Activated T-helper 1 cell treated with anti-CD3 and anti-CD28 coated beads, Interleukin-12 subunit alpha, Interleukin-12 subunit beta, Interleukin-2, Interleukin-4 antibody, amounts not matched to agents 30 ng/mL and 10 ng/mL and 1 ng/mL, durations not matched to agents 14 hours and 24 hours and 36 hours (primary cell): ENCODE measurements at regions of chr14 and their contacts with region 1.

Region 1: DNA sequence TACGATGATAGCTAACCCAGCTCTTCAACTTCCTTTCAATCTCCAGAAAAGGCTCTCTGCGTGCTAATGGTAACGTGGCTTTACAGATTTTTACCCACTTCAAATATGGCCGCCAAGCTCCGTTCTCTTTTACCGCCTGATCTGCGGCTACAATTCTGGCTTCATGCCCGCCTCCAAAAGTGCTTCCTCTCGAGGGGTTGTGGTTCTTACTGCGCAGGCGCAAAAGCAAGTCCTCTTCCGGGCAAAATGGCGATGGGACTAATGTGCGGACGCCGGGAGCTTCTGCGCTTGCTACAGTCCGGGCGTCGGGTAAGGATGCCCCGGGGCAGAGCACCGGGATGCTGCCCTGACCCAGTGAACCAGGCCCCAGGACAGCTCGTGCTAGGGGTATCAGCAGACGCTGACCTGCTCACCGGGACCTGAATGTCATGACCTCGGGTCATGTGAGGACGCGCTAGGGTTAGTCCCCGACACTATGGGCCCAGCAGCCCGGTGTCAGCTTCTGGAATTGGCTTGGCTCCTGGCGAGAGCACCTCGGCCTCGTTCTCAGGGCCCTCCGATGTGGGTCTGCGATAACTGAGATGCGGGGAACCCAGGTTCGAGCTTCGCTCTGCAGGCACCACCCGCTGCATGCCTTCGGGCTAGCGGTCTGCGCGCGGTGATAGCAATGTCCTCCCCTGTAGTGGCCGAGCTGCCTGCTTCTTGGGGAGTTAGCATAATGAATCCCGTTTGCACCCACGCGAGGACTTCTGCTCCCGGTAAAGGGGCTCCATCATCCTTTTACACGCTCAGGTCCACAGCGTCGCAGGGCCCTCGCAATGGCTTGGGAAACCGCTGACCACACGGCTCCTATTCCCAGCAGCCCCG is at the start of gene OXA1L:
- DNase-seq: peak; percentile 94
- H3K4me3 Mint-ChIP-seq: peak within 1 kb of the TSS; percentile 94
- H3K27ac Mint-ChIP-seq: peak within 1 kb of the TSS; percentile 96
- H3K4me1 Mint-ChIP-seq: peaks cover 22% of the 10 kb centered on the region
- H3K27me3 Mint-ChIP-seq: no peaks in the 10 kb centered on the region
- total RNA-seq, gene OXA1L: 125 and 127 TPM in 2 replicates

Region 2: DNA sequence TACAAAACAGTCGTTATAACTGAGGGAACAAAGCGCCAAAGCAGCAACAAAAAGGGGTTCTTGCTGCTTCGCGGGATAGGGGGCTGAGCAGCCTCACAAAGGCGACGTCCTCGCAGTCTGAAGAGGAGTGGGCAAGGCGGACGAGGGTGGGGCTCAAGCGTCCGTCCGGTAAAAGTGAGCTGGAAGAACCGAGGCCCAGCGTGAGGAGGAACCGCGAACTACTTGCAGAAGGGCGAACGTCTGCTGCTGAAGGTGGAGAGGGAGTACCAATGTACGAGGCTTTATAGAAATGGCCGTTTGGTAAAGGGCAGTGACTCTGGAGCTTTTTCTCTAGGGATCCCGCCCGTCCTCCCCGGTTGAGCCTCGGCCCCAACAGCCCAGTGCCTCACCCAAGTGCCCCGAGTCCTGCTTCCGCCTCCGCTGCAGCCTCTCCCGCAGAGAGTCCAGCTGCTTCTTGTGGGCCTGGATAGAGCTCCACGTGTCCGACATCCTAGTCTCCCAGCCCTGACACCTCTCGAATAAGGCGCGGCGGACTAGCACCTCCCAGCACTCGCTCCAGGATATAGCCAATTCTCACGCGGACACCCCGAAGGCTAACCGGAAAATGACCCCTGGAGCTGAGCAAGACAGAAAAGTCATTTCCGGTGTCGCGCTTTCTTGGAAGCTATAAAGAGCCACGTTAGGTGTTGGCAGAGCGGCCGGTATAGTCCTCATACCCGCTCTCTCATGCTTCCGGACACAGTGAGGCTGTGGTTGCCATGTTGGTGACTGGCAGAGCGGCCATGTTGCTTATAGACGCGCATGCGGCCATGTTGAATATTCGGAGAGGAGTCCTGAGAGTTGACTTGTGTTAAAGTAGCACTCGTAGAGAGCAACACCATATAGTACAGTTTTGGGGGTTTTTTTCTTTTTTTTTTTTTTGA is 1255.7 kb before region 1 on chr14 and contains the start of gene METTL3:
- intact Hi-C with region 1: loop called (anchors 2 kb)
- DNase-seq: peak; percentile 93
- H3K4me3 Mint-ChIP-seq: peak within 1 kb of the TSS; percentile 99
- H3K27ac Mint-ChIP-seq: peak within 1 kb of the TSS; percentile 93
- H3K4me1 Mint-ChIP-seq: peaks cover 27% of the 10 kb centered on the region
- H3K27me3 Mint-ChIP-seq: peaks cover 12% of the 10 kb centered on the region
- total RNA-seq, gene METTL3: 75.1 and 77.7 TPM in 2 replicates

Region 3: DNA sequence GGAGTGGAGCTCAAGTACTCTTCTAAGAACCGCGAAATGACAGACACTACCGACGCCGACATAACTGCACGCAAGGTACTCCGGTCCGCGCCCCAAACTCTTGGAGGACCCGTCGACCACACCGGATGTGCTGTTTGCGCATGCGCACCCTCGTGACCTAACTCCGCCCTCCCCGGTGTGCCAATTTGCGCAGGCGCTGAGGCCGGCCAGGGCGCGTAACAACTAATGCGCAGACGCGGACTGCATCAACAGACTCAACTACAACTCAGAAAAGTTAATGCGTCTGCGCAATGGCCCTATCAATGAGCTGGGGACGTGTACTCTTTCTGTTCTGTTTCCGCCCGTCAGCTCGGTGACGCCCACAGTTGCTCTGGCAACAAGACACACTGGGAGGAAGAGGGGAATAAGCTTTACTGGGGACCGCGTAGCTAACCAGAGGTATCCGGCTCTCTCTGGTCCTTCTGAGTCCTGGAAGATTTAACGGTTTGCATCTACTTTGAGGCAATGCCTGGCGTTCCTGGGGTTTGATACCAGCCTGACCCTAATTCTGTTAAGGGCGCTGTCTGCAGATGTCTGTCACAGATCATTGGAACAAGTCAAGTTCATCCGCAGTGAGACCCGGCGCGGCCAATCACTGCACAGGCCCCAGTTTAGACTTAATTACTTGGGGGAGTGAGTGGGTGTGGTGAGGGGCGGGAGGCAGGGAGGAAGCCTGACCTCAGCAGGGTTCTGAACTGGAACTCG is 177.4 kb before region 1 on chr14 and contains the start of gene DAD1:
- intact Hi-C with region 1: loop called (anchors 1 kb)
- DNase-seq: peak; percentile 100
- H3K4me3 Mint-ChIP-seq: peak within 1 kb of the TSS; percentile 91
- H3K27ac Mint-ChIP-seq: peak within 1 kb of the TSS; percentile 96
- H3K4me1 Mint-ChIP-seq: peaks cover 55% of the 10 kb centered on the region
- H3K27me3 Mint-ChIP-seq: no peaks in the 10 kb centered on the region
- total RNA-seq, gene DAD1: 228 and 229 TPM in 2 replicates

Region 4: DNA sequence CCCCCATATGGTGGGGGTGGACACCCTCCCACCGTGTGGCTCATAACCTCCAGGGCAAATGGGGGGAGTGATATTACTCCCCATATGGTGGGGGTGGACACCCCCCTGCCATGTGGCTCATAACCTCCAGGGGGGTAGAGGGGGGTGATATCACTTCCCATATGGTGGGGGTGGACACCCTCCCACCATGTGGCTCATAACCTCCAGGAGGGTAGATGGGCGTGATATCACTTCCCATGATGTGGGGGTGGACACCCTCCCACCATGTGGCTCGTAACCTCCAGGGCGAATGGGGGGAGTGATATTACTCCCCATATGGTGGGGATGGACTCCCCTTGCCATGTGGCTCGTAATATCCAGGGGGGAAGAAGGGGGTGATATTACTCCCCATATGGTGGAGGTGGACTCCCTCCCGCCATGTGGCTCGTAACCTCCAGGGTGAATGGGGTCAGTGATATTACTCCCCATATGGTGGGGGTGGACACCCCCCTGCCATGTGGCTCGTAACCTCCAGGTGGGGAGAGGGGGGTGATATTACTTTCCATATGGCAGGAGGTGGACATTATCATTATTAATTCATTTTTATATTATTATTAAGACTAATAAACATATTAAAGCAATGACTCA is 51.4 kb before region 1 on chr14:
- intact Hi-C with region 1: loop called (anchors 1 kb)
- DNase-seq: no peak
- H3K4me3 Mint-ChIP-seq: no peak overlapping the region
- H3K27ac Mint-ChIP-seq: no peak overlapping the region
- H3K4me1 Mint-ChIP-seq: peaks cover 17% of the 10 kb centered on the region
- H3K27me3 Mint-ChIP-seq: peaks cover 24% of the 10 kb centered on the region

Region 5: GRCh38 chr14:22737052-22737451 is 29.6 kb before region 1 on chr14:
- intact Hi-C with region 1: loop called (anchors 1 kb)
- DNase-seq: peak; percentile 43
- H3K4me3 Mint-ChIP-seq: peak overlapping the region; percentile 53
- H3K27ac Mint-ChIP-seq: peak overlapping the region; percentile 96
- H3K4me1 Mint-ChIP-seq: peaks cover 27% of the 10 kb centered on the region
- H3K27me3 Mint-ChIP-seq: peaks cover 6% of the 10 kb centered on the region

Region 6: GRCh38 chr14:22829661-22830442 is 63.2 kb after region 1 on chr14 and contains the start of gene MRPL52:
- intact Hi-C with region 1: loop called (anchors 1 kb)
- DNase-seq: peak; percentile 81
- H3K4me3 Mint-ChIP-seq: peak within 1 kb of the TSS; percentile 95
- H3K27ac Mint-ChIP-seq: peak within 1 kb of the TSS; percentile 91
- H3K4me1 Mint-ChIP-seq: peaks cover 33% of the 10 kb centered on the region
- H3K27me3 Mint-ChIP-seq: no peaks in the 10 kb centered on the region
- total RNA-seq, gene MRPL52: 187 and 196 TPM in 2 replicates

Region 7: DNA sequence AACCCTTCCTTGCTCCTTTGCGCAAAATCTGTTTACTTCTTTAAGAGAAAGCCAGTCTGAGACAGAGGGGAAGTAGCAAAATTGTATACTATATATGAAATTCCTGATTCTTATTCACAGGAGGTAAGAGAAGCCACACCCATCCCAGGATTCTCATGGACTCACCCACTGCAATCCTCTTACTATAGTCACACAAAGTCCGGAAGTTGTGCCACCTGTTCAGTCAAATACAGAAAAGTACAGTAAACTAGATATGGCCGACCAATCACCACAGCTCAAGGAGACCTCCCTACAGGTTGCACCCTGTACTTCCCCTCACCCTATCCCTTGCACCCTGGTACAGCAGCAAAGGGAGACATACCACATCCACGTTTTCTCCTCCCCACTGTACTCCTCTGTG is 159.7 kb after region 1 on chr14:
- intact Hi-C with region 1: no loop called
- DNase-seq: no peak
- H3K4me3 Mint-ChIP-seq: no peak overlapping the region
- H3K27ac Mint-ChIP-seq: no peak overlapping the region
- H3K4me1 Mint-ChIP-seq: peaks cover 34% of the 10 kb centered on the region
- H3K27me3 Mint-ChIP-seq: no peaks in the 10 kb centered on the region

Region 8: DNA sequence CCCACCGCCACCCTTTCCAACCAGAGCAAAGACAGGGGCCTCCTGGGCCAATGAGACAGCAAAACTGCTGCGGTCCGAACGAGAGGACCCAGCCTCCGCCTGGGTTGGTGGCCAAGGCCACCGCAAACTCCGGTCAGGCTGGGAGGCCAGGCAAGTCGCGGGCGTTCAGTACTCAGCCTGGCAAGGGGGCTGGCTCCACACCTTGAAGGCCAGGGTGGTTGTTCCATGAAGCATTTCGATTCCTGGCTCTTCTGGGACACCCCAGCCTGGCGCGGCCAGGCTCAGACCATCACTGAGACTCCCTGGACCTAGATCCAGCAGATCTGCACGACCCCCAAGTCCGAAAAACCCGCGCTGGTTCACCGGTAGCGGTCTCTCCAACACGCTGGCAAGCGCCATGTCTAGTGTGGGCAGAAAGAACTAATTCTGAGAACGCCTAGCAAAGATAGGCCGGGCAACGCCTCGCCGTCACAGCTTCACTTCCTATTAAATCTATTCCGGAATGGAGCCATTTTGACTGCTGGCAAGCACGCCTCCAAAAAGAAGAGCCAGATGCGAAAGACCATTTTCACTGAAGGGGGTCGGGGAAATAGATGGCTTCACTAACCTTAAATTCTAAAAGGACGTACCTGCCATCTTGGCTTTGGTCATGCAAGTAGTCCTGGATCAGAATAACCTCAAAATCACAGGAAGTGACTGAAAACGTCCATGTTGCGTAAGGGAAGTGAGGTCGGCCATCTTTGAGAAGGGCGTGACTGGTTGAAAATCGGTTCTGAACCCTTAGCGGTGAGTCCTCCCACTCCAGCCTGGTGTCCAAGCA is 268.0 kb after region 1 on chr14 and contains the start of gene PSMB5:
- intact Hi-C with region 1: loop called (anchors 2 kb)
- DNase-seq: peak; percentile 85
- H3K4me3 Mint-ChIP-seq: peak within 1 kb of the TSS; percentile 98
- H3K27ac Mint-ChIP-seq: peak within 1 kb of the TSS; percentile 98
- H3K4me1 Mint-ChIP-seq: peaks cover 28% of the 10 kb centered on the region
- H3K27me3 Mint-ChIP-seq: peaks cover 2% of the 10 kb centered on the region
- total RNA-seq, gene PSMB5: 144 and 148 TPM in 2 replicates